Motor neuron (in vitro differentiated cells): ENCODE measurements at regions of chr5 and their contacts with region 1.

Region 1: GRCh38 chr5:157917899-157918809 is 59.2 kb upstream of the CLINT1 start:
- ATAC-seq: peak in 6 of 8 experiments; percentile 29 to 93 (median 68)
- H3K4me3 ChIP-seq: no peak overlapping the region
- H3K27ac ChIP-seq: no peak overlapping the region
- H3K4me1 ChIP-seq: peaks cover 21 to 41% of the 10 kb centered on the region in 2 donors

Region 2: DNA sequence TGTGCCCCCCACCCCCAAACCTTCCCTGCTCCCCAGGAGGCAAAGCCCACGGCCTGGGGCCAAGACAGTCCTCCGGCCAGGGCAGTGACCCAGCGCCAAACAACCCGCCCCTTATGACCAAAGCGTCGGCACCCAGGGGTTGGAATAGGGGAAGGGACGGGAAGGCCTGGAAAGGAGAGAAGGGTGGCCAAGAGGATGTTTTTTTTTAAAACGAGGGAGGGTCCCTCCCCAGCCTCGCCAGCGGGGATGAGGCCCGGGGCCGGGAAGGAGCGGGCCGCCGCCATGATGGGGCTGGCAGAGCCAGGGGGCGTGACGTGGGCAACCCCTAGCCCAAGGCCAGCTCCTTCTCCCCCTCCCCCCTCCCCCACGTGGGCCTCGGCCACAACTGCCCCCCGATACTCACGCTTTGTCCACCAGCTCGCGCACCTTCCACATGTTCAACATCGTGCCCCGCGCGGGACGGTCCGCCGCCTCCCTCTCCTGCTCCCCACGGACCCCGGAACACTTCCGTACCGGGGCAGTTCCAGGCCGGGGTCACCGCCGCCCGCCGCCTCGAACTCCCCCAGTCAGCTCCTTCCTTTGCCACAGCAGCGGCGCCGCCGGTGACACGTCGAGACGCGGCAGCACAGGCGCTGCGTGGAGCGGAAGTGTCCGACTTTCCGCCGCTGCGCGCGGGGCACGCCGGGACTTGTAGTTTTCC is 59.5 kb before region 1 on chr5 and contains the start of gene CLINT1:
- in situ Hi-C with region 1: loop called in 1 of 9 experiments (anchors 10 kb)
- ATAC-seq: peak; percentile 93 to 99 (median 96)
- H3K4me3 ChIP-seq: peak within 1 kb of the TSS; percentile 54 to 97 (median 77)
- H3K27ac ChIP-seq: peak within 1 kb of the TSS; percentile 82 to 93
- H3K4me1 ChIP-seq: peaks cover 9 to 24% of the 10 kb centered on the region in 2 donors
- total RNA-seq, gene CLINT1: 31.8 to 83.5 (median 53.8) TPM